Activated naive CD8-positive, alpha-beta T cell treated with anti-CD3 and anti-CD28 coated beads, Interleukin-2, amount 10 ng/mL, durations not matched to agents 7 days and 5 days (primary cell): ENCODE measurements at regions of chr11 and their contacts with region 1.

Region 1: DNA sequence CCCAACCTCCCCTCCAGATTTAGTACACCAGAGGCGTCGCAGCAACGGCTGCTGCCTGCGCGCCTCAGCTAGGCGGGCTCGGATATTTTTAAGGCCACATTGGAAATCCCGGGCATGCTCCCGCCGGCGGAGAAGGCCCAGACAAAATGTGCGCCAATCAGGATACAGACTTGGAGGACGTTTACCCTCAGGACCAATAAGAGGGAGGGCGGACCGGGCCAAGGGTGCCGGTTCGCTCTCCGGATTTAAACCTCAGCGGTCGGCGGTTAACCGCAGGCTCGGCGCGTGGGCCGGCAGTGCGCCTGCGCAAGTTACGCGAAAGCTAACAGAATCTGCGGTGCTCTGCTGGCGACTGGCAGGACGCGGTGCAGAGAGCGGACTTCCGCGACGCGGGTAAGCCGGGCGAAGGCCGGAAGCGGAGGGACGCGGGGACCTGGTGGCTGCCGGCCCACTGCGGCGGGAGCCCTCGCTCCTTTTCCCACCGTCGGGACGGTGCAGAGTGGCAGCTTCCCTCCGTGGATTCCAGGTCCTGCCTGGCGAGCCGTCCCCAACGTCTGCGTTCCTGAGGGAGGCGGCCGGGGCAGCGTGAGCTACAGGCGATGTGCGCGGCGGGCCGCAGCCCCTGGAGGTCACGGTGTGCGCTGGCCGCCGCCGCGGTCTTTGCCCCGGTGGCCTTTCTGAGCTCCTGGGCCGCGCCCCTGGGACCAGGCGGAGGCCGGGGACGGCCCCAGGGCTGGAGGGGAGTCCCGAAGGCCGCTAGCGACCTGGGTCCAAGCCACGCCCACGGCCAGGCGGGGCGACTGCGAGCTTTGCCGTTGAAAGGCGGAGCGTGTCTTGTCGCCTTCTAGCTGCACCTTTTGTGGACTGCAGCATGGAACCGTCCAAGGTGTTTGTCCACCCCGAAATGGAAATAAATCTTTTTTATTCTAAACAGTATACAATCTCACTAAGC is at the start of gene HYLS1:
- DNase-seq: peak; percentile 100
- ATAC-seq: peak; percentile 84
- H3K4me3 Mint-ChIP-seq: peak within 1 kb of the TSS; percentile 84
- H3K27ac Mint-ChIP-seq: peak within 1 kb of the TSS; percentile 91
- H3K4me1 Mint-ChIP-seq: peaks cover 20% of the 10 kb centered on the region
- H3K27me3 Mint-ChIP-seq: no peaks in the 10 kb centered on the region
- total RNA-seq, gene HYLS1: 9.6 to 10.4 TPM

Region 2: GRCh38 chr11:125568970-125569914 is 318.4 kb before region 1 on chr11 and contains the start of gene EI24:
- POLR2A ChIA-PET with region 1: interaction called, 12 read pairs
- DNase-seq: peak; percentile 90
- ATAC-seq: peak; percentile 99
- H3K4me3 Mint-ChIP-seq: peak within 1 kb of the TSS; percentile 93
- H3K27ac Mint-ChIP-seq: peak within 1 kb of the TSS; percentile 92
- H3K4me1 Mint-ChIP-seq: peaks cover 28% of the 10 kb centered on the region
- H3K27me3 Mint-ChIP-seq: no peaks in the 10 kb centered on the region
- total RNA-seq, gene EI24: 39.0 to 39.2 TPM

Region 3: GRCh38 chr11:125902927-125903710 is 15.5 kb after region 1 on chr11 and contains the start of gene PUS3:
- POLR2A ChIA-PET with region 1: interaction called, 44 read pairs
- DNase-seq: peak; percentile 88
- ATAC-seq: peak; percentile 95
- H3K4me3 Mint-ChIP-seq: peak within 1 kb of the TSS; percentile 89
- H3K27ac Mint-ChIP-seq: peak within 1 kb of the TSS; percentile 86
- H3K4me1 Mint-ChIP-seq: peaks cover 15% of the 10 kb centered on the region
- H3K27me3 Mint-ChIP-seq: peaks cover 22% of the 10 kb centered on the region
- total RNA-seq, gene PUS3: 10.1 to 10.9 TPM